ENCODE measurements at regions of chr3 and their contacts with region 1.

Region 1: DNA sequence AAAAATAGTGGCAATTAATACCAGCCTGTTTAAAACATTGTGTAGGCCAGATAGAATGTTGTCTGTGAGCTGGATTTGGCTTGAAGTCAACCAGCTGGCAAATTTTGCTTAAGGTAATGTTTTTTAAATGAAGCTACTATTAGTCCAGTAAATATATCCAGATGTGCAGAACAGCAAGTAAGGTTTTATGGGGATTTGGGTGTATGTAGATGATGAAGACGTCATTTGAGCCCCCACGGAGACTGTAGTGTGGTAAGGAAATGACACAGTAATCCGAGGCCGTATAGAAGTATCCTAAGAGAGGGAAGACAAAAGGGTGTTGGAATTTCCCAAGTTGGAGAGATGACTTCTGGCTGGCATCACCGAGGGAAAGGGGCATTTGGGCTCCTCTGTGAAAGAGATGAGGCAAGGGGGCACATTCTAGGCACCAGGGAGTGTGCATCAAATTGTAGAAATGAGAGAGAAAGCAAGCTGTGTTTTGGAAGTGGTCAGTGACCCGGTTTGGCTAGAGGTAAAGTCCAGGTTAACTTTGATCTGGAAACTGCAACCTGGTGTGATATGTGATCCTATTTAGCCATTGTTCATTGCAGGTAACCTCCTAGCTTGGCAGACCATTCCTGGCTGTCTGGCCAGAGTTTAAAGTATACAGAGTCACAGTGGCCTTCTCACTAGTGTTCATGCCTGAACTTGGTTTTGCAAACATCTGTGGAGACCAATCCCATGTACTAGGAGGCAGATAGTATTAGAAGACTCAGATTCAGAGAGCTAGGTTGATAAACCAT is 104.2 kb downstream of the ITPR1 start:
- DNase-seq: no peak
- H3K4me3 ChIP-seq: no peak overlapping the region
- H3K4me3 Mint-ChIP-seq: no peak overlapping the region
- H3K27ac Mint-ChIP-seq: no peak overlapping the region
- H3K4me1 ChIP-seq: no peaks in the 10 kb centered on the region
- H3K4me1 Mint-ChIP-seq: no peaks in the 10 kb centered on the region
- H3K27me3 ChIP-seq: no peaks in the 10 kb centered on the region
- H3K27me3 Mint-ChIP-seq: peaks cover 2% of the 10 kb centered on the region
- CTCF ChIP-seq: no peak

Region 2: DNA sequence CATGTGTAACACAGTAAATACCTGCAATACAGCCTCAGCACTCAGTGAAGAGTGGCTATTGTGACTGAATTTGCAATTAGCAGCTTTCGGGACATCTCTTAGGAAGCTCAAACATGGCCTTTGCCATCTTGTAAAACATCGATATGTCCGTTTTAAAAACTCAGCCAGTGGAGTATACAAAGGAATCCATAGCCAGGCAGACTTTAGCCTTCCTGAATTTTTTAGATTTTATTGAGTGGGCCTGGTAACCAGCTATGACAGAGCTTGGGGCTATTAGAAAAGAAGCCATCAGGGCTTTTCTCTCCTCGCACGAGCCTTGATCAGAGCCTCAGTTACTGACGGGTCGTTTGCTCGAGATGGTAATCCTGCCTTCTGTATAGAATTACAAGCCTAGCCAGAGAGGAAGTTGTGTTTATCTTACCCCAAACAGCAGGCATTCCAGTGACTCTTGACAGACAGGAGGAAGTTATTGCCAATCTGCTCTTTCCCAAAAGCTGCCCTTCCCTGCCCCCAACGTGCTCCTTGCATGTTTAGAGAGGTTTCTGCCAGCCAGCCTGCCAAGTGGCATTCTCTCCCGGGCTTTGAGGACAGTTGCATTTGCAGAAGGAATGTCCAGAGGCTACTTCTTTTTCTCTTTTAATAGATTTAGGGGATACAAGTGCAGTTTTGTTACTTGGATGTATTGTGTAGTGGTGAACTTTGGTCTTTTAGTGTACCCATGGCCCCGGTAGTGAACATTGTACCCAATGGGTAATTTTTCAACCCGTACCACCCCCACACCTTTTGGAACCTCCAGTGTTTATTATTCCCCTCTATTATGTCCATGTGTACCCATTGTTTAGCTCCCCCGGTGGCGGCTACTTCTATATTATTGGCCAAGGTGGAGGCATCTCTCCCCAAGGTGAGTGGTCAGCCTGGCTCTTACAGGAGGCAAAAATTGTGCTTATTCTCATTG is 63.6 kb before region 1 on chr3:
- CTCF ChIA-PET with region 1: no interaction called
- POLR2A ChIA-PET with region 1: no interaction called
- intact Hi-C with region 1: no loop called
- DNase-seq: no peak
- H3K4me3 ChIP-seq: no peak overlapping the region
- H3K4me3 Mint-ChIP-seq: no peak overlapping the region
- H3K27ac Mint-ChIP-seq: no peak overlapping the region
- H3K4me1 ChIP-seq: peaks cover 8% of the 10 kb centered on the region
- H3K4me1 Mint-ChIP-seq: no peaks in the 10 kb centered on the region
- H3K27me3 ChIP-seq: no peaks in the 10 kb centered on the region
- H3K27me3 Mint-ChIP-seq: no peaks in the 10 kb centered on the region
- CTCF ChIP-seq: no peak

Region 3: GRCh38 chr3:4551051-4551711 is 46.2 kb before region 1 on chr3:
- CTCF ChIA-PET with region 1: no interaction called
- POLR2A ChIA-PET with region 1: no interaction called
- intact Hi-C with region 1: no loop called
- DNase-seq: no peak
- H3K4me3 ChIP-seq: no peak overlapping the region
- H3K4me3 Mint-ChIP-seq: no peak overlapping the region
- H3K27ac Mint-ChIP-seq: no peak overlapping the region
- H3K4me1 ChIP-seq: no peaks in the 10 kb centered on the region
- H3K4me1 Mint-ChIP-seq: no peaks in the 10 kb centered on the region
- H3K27me3 ChIP-seq: no peaks in the 10 kb centered on the region
- H3K27me3 Mint-ChIP-seq: peaks cover 4% of the 10 kb centered on the region
- CTCF ChIP-seq: no peak

Region 4: DNA sequence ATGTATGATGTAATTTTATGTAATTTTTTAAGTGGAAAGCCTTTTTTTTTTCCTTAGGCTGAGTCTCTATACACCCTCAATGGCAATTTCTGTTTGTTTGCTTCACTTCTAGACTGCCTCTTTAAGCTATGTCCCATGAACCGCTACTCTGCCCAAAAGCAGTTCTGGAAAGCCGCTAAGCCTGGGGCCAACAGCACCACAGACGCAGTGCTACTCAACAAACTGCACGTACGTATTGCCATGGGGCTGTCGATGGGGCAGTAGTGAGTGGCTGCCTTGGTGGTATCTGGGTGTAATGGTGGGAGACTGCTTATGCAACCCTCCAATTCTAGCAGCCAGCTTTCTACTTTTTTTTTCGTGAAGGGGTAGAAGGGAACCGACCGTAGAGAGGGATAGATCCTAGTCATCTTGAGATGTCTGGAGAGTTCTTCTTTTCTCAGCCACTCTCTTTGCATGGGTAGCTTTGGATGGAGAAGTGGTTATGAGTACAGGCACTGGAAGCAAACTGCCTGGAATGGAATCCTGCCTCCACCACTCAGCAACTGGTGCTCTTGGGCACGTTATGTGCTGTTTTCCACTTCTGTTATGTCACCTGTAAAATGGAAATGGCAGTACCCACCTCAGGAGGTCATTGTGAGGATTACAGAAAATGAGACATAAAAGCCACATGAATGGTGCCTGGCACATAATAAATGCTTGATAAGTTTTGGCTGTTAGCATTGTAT is 30.4 kb after region 1 on chr3:
- CTCF ChIA-PET with region 1: no interaction called
- POLR2A ChIA-PET with region 1: no interaction called
- intact Hi-C with region 1: loop called (anchors 1 kb)
- DNase-seq: no peak
- H3K4me3 ChIP-seq: no peak overlapping the region
- H3K4me3 Mint-ChIP-seq: no peak overlapping the region
- H3K27ac Mint-ChIP-seq: no peak overlapping the region
- H3K4me1 ChIP-seq: no peaks in the 10 kb centered on the region
- H3K4me1 Mint-ChIP-seq: no peaks in the 10 kb centered on the region
- H3K27me3 ChIP-seq: no peaks in the 10 kb centered on the region
- H3K27me3 Mint-ChIP-seq: peaks cover 2% of the 10 kb centered on the region
- CTCF ChIP-seq: no peak

Measured in Caco-2 (cell line).